Activated CD4-positive, alpha-beta memory T cell treated with anti-CD3 and anti-CD28 coated beads, Interleukin-2, amount 10 ng/mL, durations not matched to agents 7 days and 5 days (primary cell): ENCODE measurements at regions of chr4 and their contacts with region 1.

Region 1: DNA sequence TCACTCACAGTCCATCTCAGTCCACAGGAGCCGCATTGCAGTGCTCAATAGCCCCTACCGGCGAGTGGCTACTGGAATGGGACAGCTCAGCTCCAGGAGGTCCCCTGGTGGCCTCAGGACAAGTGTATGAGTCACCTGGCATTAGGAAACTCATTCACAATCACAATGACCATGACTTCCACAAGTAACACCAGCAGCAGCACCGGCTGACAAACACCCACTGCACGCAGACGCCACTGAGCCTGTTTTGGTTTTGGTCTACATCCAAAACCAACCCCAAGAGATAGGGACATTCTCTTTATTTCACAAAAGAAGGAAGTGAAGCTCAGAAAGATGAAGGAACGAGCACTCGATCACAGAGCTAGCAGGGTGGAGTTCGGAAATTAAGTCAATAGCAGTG is 8.1 kb downstream of the JAKMIP1 start:
- DNase-seq: no peak
- H3K4me3 Mint-ChIP-seq: no peak overlapping the region
- H3K27ac Mint-ChIP-seq: peak overlapping the region; percentile 4
- H3K4me1 Mint-ChIP-seq: peaks cover 80% of the 10 kb centered on the region
- H3K27me3 Mint-ChIP-seq: no peaks in the 10 kb centered on the region

Region 2: GRCh38 chr4:6134612-6135220 is 57.5 kb before region 1 on chr4:
- CTCF ChIA-PET with region 1: interaction called, 20 read pairs
- POLR2A ChIA-PET with region 1: interaction called, 6 read pairs
- DNase-seq: peak; percentile 85
- H3K4me3 Mint-ChIP-seq: no peak overlapping the region
- H3K27ac Mint-ChIP-seq: peak overlapping the region; percentile 77
- H3K4me1 Mint-ChIP-seq: peaks cover 41% of the 10 kb centered on the region
- H3K27me3 Mint-ChIP-seq: no peaks in the 10 kb centered on the region